ENCODE measurements at regions of chr7 and their contacts with region 1.

Region 1: DNA sequence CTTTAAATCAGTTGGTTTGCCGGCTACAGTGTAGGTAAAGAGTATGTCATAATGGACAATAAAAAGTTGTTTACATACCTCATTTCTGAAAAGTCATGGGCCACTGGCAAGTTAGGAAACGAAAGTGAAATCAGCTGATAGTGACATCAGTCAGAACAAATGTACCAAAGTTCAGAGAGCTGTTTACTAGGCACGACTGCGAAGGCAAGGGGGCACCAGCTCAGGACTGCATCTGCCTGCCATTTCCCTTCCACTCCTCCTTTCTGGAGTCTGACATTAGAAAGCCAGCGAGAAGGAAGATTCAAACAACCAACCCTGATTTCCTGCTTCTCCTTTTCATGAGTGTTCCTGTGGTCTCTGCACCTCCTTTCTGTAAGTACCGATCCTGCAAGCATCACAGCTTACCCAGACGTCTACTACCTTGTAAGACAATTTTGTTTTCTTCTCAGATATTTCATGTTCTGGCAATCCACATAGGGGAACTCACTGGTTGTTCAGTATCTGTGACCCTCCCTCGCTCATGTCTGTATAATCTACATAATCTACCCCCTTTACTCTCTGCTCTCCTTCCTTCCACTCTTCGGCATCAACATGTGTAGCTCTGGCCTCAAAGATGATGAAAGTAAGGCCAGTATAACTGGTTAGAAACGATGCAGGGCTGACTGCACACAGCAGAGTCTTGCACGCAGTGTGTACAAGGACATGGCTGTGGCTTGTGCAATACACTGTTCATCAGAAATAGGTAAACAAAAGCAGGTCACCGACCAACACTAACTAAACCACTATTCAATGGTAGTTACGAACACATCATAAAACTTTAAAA is at the start of gene TMEM140:
- DNase-seq: peak; percentile 34 to 88 (median 74)
- ATAC-seq: peak; percentile 81 to 84
- H3K4me3 Mint-ChIP-seq: peak within 1 kb of the TSS; percentile 85 to 98 (median 93)
- H3K27ac Mint-ChIP-seq: peak within 1 kb of the TSS; percentile 96 to 100 (median 98)
- H3K4me1 Mint-ChIP-seq: peaks cover 37 to 83% (median 74%) of the 10 kb centered on the region in 4 donors
- H3K27me3 Mint-ChIP-seq: no peaks in the 10 kb centered on the region
- polyA plus RNA-seq, gene TMEM140: 13.9 to 36.9 (median 20.2) TPM

Region 2: DNA sequence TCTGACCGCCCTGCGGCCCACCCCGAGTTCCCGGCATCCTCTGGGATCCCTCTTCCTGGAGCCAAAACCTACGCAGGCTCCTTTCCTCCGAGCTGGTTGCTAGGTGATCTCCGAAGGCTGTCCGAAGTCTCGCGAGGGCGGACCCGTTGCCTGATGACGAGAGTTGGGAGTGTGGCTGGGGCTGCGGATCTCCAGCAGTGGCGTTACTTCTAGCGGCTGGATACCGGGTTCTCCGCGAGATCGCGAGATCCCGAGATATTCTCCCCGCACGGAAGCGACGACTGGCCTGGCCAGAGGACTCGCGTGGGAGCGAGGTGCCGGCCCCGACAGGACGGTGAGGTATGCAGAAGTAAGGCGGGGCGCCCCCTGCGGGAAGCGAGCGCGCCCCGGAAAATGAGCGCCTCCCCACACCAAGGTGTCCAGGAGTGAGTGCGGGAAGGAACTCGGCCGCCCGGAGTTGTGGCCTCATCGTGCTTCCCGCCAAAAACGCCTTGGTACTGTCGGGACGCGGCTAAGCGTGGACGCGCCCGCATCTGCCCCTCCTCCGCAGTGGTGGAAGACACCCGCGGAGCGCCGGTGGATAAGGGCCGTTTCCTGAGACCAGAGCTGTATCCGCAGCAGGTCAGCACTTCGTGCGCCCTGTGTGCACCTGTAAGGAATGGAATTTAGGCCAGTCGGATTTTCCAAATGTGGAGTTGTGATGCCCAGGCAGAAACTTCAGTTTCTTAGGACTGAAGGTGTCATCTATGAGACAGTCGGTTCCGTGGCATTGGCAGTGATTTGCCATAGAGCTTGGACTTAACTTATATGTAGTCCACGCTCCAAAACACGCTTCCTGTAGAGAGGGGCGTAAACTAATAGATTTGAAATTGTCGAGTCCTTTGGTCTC is 161.5 kb before region 1 on chr7 and contains the start of gene AGBL3:
- POLR2A ChIA-PET with region 1: interaction called, 84 read pairs
- DNase-seq: peak; percentile 74 to 97 (median 90)
- ATAC-seq: peak; percentile 88 to 90
- H3K4me3 Mint-ChIP-seq: peak within 1 kb of the TSS; percentile 93 to 100 (median 98)
- H3K27ac Mint-ChIP-seq: peak within 1 kb of the TSS; percentile 95 to 100 (median 100)
- H3K4me1 Mint-ChIP-seq: peaks cover 26 to 55% (median 51%) of the 10 kb centered on the region in 4 donors
- H3K27me3 Mint-ChIP-seq: no peaks in the 10 kb centered on the region
- polyA plus RNA-seq, gene AGBL3: 1.8 to 4.0 (median 3.2) TPM

Region 3: DNA sequence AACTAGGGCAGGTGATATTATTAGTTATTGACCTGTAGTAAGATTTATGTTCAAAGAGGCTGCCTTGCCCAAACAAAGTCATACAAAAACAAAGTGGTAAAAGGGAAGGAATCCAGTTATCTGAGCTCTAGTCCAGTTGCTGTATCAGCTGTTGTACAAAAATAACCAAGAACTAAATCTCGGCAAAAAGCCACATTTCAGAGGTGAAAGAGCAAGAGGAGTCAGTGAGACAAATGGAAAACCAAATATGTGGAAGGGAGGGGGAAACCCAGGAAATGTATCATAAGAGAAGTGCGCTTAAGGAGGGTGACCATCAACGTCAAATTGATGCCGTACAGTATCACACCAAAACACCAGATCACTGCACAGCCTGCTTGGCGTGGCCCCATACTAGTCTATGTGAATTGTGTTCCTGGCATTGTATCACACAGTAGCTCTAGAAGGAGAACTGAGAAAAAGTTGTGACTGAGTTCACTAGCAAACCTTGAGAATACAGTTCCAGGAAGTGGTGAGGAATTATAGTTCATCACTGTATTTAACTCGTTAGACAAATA is 155.4 kb before region 1 on chr7:
- POLR2A ChIA-PET with region 1: interaction called, 84 read pairs
- DNase-seq: peak in 7 of 10 donors; percentile 31 to 68 (median 50)
- ATAC-seq: peak; percentile 52 to 54
- H3K4me3 Mint-ChIP-seq: peak overlapping the region; percentile 41 to 80 (median 76)
- H3K27ac Mint-ChIP-seq: peak overlapping the region; percentile 91 to 99 (median 98)
- H3K4me1 Mint-ChIP-seq: peaks cover 41 to 93% (median 84%) of the 10 kb centered on the region in 4 donors
- H3K27me3 Mint-ChIP-seq: no peaks in the 10 kb centered on the region

Region 4: GRCh38 chr7:135129580-135129979 is 18.5 kb before region 1 on chr7:
- POLR2A ChIA-PET with region 1: no interaction called
- DNase-seq: no peak
- ATAC-seq: no peak
- H3K4me3 Mint-ChIP-seq: no peak overlapping the region
- H3K27ac Mint-ChIP-seq: no peak overlapping the region
- H3K4me1 Mint-ChIP-seq: peaks cover 0 to 4% (median under 1%) of the 10 kb centered on the region in 4 donors
- H3K27me3 Mint-ChIP-seq: no peaks in the 10 kb centered on the region

Region 5: DNA sequence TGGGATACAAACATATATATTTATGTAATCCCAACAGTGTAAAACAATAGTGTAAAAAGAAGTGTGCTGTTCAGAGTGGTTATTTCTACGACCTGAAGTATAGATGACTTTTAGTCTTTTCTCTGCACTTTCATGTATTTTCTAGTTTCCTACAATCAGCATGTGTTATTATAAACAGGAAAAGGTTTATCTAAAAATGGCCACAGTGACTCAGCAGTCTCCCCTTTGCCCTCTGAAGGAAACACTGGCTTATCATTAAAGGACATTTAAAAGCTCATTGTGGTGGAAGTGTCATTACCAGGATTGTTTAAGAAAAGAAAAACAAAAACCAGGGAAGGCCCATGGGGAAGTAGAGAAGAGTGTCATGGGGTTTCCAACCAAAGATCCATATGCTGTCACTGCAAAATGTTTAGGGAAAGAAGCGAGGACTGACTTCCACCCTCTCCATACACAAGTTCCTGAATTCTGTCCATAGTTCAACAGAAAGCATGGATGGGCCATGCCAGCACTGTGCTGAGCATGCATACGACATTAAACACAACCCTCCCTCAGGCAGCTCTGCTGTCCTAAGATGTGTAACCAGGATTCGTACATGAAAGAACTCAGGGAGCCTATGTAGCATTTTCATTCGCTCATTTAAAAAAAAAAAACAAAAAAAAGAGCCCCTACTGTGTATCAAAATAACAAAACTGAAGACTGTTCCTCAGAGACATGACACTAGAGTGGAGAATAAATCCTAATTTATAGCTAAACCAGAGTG is 12.2 kb after region 1 on chr7:
- POLR2A ChIA-PET with region 1: interaction called, 45 read pairs
- DNase-seq: no peak
- ATAC-seq: peak in 1 of 2 donors; percentile 20
- H3K4me3 Mint-ChIP-seq: peak overlapping the region in 6 of 10 donors; percentile 7 to 62 (median 32)
- H3K27ac Mint-ChIP-seq: peak overlapping the region; percentile 6 to 87 (median 74)
- H3K4me1 Mint-ChIP-seq: peaks cover 33 to 76% (median 71%) of the 10 kb centered on the region in 4 donors
- H3K27me3 Mint-ChIP-seq: no peaks in the 10 kb centered on the region

Region 6: GRCh38 chr7:135170274-135170997 is 22.3 kb after region 1 on chr7 and contains the start of gene CYREN:
- POLR2A ChIA-PET with region 1: interaction called, 77 read pairs
- DNase-seq: peak; percentile 78 to 93 (median 84)
- ATAC-seq: peak; percentile 77 to 79
- H3K4me3 Mint-ChIP-seq: peak within 1 kb of the TSS; percentile 85 to 94 (median 90)
- H3K27ac Mint-ChIP-seq: peak within 1 kb of the TSS; percentile 93 to 98 (median 96)
- H3K4me1 Mint-ChIP-seq: peaks cover 26 to 59% (median 55%) of the 10 kb centered on the region in 4 donors
- H3K27me3 Mint-ChIP-seq: no peaks in the 10 kb centered on the region
- polyA plus RNA-seq, gene CYREN: 55.5 to 70.1 (median 59.5) TPM

Region 7: GRCh38 chr7:135211179-135211945 is 63.3 kb after region 1 on chr7 and contains the start of gene WDR91:
- POLR2A ChIA-PET with region 1: interaction called, 16 read pairs
- DNase-seq: peak; percentile 85 to 100 (median 94)
- ATAC-seq: peak; percentile 87 to 92
- H3K4me3 Mint-ChIP-seq: peak within 1 kb of the TSS; percentile 92 to 99 (median 96)
- H3K27ac Mint-ChIP-seq: peak within 1 kb of the TSS; percentile 93 to 100 (median 98)
- H3K4me1 Mint-ChIP-seq: peaks cover 15 to 47% (median 38%) of the 10 kb centered on the region in 4 donors
- H3K27me3 Mint-ChIP-seq: no peaks in the 10 kb centered on the region
- polyA plus RNA-seq, gene WDR91: 3.3 to 7.2 (median 5.9) TPM